Activated CD4-positive, alpha-beta T cell treated with anti-CD3 and anti-CD28 coated beads for 36 hours (primary cell): ENCODE measurements at regions of chr9 and their contacts with region 1.

Region 1: DNA sequence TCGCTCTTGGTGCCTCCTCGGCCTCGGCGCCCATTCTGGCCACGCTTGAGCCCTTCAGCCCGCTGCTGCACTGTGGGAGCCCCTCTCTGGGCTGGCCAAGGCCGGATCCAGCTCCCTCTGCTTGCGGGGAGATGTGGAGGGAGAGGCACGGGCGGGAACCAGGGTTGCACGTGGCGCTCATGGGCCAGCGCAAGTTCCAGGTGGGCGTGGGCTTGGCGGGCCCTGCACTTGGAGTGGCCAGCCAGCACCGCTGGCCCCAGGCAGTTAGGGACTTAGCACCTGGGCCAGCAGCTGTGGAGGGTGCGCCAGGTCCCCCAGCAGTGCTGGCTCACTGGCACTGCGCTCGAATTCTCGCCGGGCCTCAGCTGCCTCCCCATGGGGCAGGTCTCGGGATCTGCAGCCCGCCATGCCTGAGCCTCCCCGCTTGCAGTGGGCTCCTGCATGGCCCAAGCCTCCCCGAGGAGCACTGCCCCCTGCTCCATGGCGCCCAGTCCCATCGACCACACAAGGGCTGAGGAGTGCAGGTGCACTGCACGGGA is 106.4 kb downstream of the SMC2 start:
- DNase-seq: no peak
- ATAC-seq: no peak
- H3K4me3 Mint-ChIP-seq: no peak overlapping the region
- H3K27ac Mint-ChIP-seq: no peak overlapping the region
- H3K4me1 Mint-ChIP-seq: no peaks in the 10 kb centered on the region
- H3K27me3 Mint-ChIP-seq: peaks cover 2% of the 10 kb centered on the region

Region 2: GRCh38 chr9:104279535-104280190 is 79.1 kb after region 1 on chr9:
- CTCF ChIA-PET with region 1: no interaction called
- POLR2A ChIA-PET with region 1: no interaction called
- intact Hi-C with region 1: loop called in 1 of 2 experiments (anchors 10 kb)
- DNase-seq: no peak
- ATAC-seq: no peak
- H3K4me3 Mint-ChIP-seq: no peak overlapping the region
- H3K27ac Mint-ChIP-seq: no peak overlapping the region
- H3K4me1 Mint-ChIP-seq: no peaks in the 10 kb centered on the region
- H3K27me3 Mint-ChIP-seq: no peaks in the 10 kb centered on the region

Region 3: DNA sequence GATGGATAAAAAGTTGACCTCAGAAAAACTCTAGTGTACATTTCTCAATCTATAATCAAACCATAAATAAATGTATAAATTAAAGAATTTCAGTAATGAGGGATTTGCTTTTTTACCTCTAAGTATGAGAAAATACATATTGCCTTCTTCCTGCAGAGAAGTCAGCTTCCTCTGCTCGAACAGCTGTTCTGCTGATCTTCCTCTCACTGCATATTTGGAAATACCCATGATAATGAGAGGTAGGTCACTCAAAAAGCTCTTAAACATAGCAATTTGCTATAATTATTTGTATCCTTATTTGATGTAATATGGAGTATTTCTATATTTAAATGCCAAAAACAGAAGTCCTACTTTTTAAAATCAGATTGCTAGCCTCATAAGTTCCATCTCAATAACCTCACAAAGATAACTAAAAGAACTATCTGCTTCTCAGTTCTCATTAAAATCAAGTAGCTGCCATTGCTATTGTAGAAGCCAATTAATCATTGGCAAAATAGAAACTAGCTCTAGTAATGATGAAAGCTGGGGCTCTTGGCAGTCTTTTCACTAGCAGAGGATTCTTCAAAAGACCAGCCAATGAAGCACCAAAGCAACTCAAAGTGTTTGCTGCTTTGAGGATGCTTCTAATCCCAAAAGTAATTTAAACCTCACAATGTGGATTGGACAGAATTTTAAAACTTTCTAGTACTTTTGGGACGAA is 458.1 kb after region 1 on chr9:
- CTCF ChIA-PET with region 1: no interaction called
- POLR2A ChIA-PET with region 1: no interaction called
- intact Hi-C with region 1: no loop called
- DNase-seq: no peak
- ATAC-seq: no peak
- H3K4me3 Mint-ChIP-seq: no peak overlapping the region
- H3K27ac Mint-ChIP-seq: no peak overlapping the region
- H3K4me1 Mint-ChIP-seq: no peaks in the 10 kb centered on the region
- H3K27me3 Mint-ChIP-seq: no peaks in the 10 kb centered on the region